Naive thymus-derived CD4-positive, alpha-beta T cell (primary cell): ENCODE measurements at regions of chr18 and their contacts with region 1.

Region 1: GRCh38 chr18:63016270-63016669 is 300.9 kb downstream of the PHLPP1 start:
- DNase-seq: peak in 7 of 9 donors; percentile 34 to 65 (median 56)
- ATAC-seq: peak; percentile 77
- H3K4me3 ChIP-seq: no peak overlapping the region
- H3K4me3 Mint-ChIP-seq: no peak overlapping the region
- H3K27ac ChIP-seq: no peak overlapping the region
- H3K27ac Mint-ChIP-seq: no peak overlapping the region
- H3K4me1 ChIP-seq: no peaks in the 10 kb centered on the region
- H3K4me1 Mint-ChIP-seq: peaks cover 0 to 2% (median 0%) of the 10 kb centered on the region in 7 donors
- H3K27me3 ChIP-seq: no peaks in the 10 kb centered on the region
- H3K27me3 Mint-ChIP-seq: peaks cover 7 to 61% (median 13%) of the 10 kb centered on the region in 5 donors

Region 2: DNA sequence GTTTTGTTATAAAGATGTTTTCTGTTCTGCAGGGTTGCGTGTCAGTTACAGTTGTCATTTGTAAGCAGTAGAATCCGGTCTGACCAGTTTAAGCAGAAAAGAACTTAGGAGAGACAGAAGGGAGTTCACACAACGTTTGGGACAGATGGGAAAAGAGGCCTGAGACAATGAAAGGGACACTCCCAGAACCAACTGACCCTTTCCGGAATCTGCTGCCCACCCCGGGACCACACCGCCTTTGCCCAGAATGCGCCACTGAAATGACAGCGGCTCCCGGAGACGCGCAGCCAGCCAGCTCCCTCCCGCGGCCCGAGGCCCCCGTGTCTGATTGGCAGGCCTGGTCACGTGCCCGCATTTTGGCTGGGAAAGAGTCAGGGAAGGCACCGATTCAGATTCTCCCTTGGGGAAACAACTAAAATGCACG is 58.7 kb after region 1 on chr18:
- CTCF ChIA-PET with region 1: no interaction called
- POLR2A ChIA-PET with region 1: no interaction called
- intact Hi-C with region 1: loop called (anchors 1 kb)
- DNase-seq: peak; percentile 19 to 68 (median 42)
- ATAC-seq: peak; percentile 80
- H3K4me3 ChIP-seq: peak overlapping the region; percentile 66
- H3K4me3 Mint-ChIP-seq: peak overlapping the region; percentile 70 to 95 (median 86)
- H3K27ac ChIP-seq: no peak overlapping the region
- H3K27ac Mint-ChIP-seq: peak overlapping the region in 8 of 9 donors; percentile 0 to 85 (median 65)
- H3K4me1 ChIP-seq: no peaks in the 10 kb centered on the region
- H3K4me1 Mint-ChIP-seq: peaks cover 0 to 13% (median 12%) of the 10 kb centered on the region in 7 donors
- H3K27me3 ChIP-seq: no peaks in the 10 kb centered on the region
- H3K27me3 Mint-ChIP-seq: peaks cover 0 to 23% (median 10%) of the 10 kb centered on the region in 5 donors

Region 3: GRCh38 chr18:63155169-63155852 is 139.0 kb after region 1 on chr18:
- CTCF ChIA-PET with region 1: interaction called, 5 read pairs
- POLR2A ChIA-PET with region 1: interaction called, 4 read pairs
- intact Hi-C with region 1: loop called in 1 of 2 experiments (anchors 2 kb)
- DNase-seq: peak; percentile 64 to 89 (median 80)
- ATAC-seq: peak; percentile 85
- H3K4me3 ChIP-seq: peak overlapping the region; percentile 56
- H3K4me3 Mint-ChIP-seq: peak overlapping the region; percentile 78 to 99 (median 88)
- H3K27ac ChIP-seq: peak overlapping the region; percentile 90
- H3K27ac Mint-ChIP-seq: peak overlapping the region; percentile 77 to 99 (median 95)
- H3K4me1 ChIP-seq: peaks cover 89 to 92% of the 10 kb centered on the region in 2 donors
- H3K4me1 Mint-ChIP-seq: peaks cover 80 to 100% (median 100%) of the 10 kb centered on the region in 7 donors
- H3K27me3 ChIP-seq: no peaks in the 10 kb centered on the region
- H3K27me3 Mint-ChIP-seq: no peaks in the 10 kb centered on the region

Region 4: GRCh38 chr18:63253428-63254372 is 237.4 kb after region 1 on chr18:
- CTCF ChIA-PET with region 1: no interaction called
- POLR2A ChIA-PET with region 1: no interaction called
- intact Hi-C with region 1: loop called in 1 of 2 experiments (anchors 10 kb)
- DNase-seq: no peak
- ATAC-seq: peak; percentile 74
- H3K4me3 ChIP-seq: no peak overlapping the region
- H3K4me3 Mint-ChIP-seq: peak overlapping the region in 8 of 10 donors; percentile 1 to 64 (median 32)
- H3K27ac ChIP-seq: no peak overlapping the region
- H3K27ac Mint-ChIP-seq: peak overlapping the region in 8 of 9 donors; percentile 9 to 79 (median 53)
- H3K4me1 ChIP-seq: peaks cover 7 to 25% of the 10 kb centered on the region in 2 donors
- H3K4me1 Mint-ChIP-seq: peaks cover 42 to 81% (median 73%) of the 10 kb centered on the region in 7 donors
- H3K27me3 ChIP-seq: no peaks in the 10 kb centered on the region
- H3K27me3 Mint-ChIP-seq: no peaks in the 10 kb centered on the region

Region 5: DNA sequence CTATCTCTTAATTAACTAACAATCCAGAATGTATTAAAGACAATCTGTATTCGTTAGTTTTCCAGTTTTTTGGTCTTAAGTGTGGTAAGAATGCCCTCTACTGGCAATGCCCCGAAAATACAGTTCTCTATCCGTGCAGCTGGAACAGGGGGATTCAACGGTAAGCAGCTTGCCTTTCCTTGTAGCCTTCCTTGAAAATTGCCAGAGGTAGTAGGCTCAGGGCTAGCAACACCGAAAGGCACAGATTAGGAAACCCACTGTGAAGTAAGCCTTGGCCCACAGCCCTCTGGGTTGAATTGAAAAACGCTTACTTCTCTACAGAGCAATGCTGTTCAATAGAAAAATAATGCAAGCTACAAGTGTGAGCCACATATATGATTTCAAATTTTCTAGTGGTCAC is 423.1 kb after region 1 on chr18:
- CTCF ChIA-PET with region 1: interaction called, 77 read pairs
- POLR2A ChIA-PET with region 1: no interaction called
- intact Hi-C with region 1: loop called (anchors 1 kb)
- DNase-seq: peak; percentile 12 to 64 (median 49)
- ATAC-seq: peak; percentile 81
- H3K4me3 ChIP-seq: no peak overlapping the region
- H3K4me3 Mint-ChIP-seq: no peak overlapping the region
- H3K27ac ChIP-seq: no peak overlapping the region
- H3K27ac Mint-ChIP-seq: no peak overlapping the region
- H3K4me1 ChIP-seq: no peaks in the 10 kb centered on the region
- H3K4me1 Mint-ChIP-seq: peaks cover 0 to 4% (median 3%) of the 10 kb centered on the region in 7 donors
- H3K27me3 ChIP-seq: no peaks in the 10 kb centered on the region
- H3K27me3 Mint-ChIP-seq: peaks cover 0 to 43% (median 5%) of the 10 kb centered on the region in 5 donors